Common myeloid progenitor, CD34-positive (primary cell): ENCODE measurements at regions of chr5 and their contacts with region 1.

Region 1: DNA sequence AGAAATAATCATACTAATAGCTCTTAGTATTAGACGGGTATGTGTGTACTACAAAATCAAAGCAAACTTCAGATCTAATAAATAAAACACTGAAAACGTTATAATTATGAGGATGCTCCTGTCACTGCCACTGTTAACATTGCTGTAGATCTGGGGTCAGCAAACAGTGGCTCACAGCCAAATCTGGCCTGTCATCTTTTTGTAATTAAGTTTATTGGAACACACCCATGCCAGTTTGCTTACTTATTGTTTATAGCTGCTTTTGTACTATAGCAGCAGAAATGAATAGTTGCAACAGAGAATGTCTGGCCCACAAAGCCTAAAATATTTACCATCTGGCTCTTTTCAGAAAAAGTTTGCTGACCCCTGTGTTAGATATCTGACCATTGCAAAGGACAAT is 32.1 kb downstream of the PRRC1 start:
- DNase-seq: no peak
- H3K4me3 ChIP-seq: no peak overlapping the region
- H3K27ac ChIP-seq: no peak overlapping the region
- H3K4me1 ChIP-seq: no peaks in the 10 kb centered on the region
- H3K27me3 ChIP-seq: no peaks in the 10 kb centered on the region

Region 2: GRCh38 chr5:127471211-127471610 is 78.3 kb before region 1 on chr5:
- CTCF ChIA-PET with region 1: no interaction called
- POLR2A ChIA-PET with region 1: no interaction called
- DNase-seq: peak; percentile 22 to 67 (median 37)
- H3K4me3 ChIP-seq: no peak overlapping the region
- H3K27ac ChIP-seq: no peak overlapping the region
- H3K4me1 ChIP-seq: no peaks in the 10 kb centered on the region
- H3K27me3 ChIP-seq: no peaks in the 10 kb centered on the region

Region 3: DNA sequence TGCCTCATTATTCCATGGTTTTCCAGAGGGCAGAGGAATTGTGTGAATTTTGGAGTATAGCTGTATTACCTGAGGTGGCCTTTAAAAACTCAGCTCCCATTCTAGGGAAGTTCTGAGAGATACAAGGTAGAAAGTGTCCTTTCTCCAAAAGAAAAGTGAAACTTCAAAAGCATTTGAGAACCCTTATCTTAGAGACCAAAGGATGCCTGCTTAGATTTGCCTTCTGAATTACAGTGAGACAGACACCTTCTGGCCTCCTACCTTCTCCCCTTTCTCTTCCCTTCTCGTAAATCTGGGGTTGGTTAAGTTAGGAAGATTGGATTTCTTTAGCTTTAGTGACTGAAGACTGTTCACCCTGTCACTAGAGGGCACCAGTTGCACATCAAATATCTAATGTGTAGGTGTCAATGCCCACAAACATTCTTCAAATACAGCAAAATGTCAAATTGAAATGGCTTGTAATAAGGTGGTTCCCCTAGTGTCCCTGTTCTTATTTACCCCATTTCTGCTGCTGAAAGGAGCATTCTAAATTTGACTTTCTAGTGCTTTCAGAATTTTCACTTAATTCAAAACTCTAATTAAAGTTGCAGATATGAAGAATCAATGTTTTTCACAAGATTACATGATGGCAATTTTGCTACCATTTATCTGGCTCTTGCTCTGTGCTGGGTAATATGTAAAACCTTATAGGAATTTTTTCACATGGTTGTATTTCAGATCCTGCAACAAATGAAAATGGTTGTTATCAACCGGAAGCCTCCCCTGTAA is 14.7 kb after region 1 on chr5:
- CTCF ChIA-PET with region 1: interaction called, 21 read pairs
- POLR2A ChIA-PET with region 1: no interaction called
- DNase-seq: peak; percentile 81 to 87 (median 81)
- H3K4me3 ChIP-seq: no peak overlapping the region
- H3K27ac ChIP-seq: no peak overlapping the region
- H3K4me1 ChIP-seq: peaks cover 19 to 66% (median 40%) of the 10 kb centered on the region in 4 experiments
- H3K27me3 ChIP-seq: no peaks in the 10 kb centered on the region

Region 4: GRCh38 chr5:127799293-127799905 is 249.9 kb after region 1 on chr5:
- CTCF ChIA-PET with region 1: no interaction called
- POLR2A ChIA-PET with region 1: no interaction called
- DNase-seq: no peak
- H3K4me3 ChIP-seq: no peak overlapping the region
- H3K27ac ChIP-seq: no peak overlapping the region
- H3K4me1 ChIP-seq: peaks cover 0 to 9% (median under 1%) of the 10 kb centered on the region in 4 experiments
- H3K27me3 ChIP-seq: no peaks in the 10 kb centered on the region